Astrocyte of the cerebellum (primary cell): ENCODE measurements at regions of chr1 and their contacts with region 1.

Region 1: GRCh38 chr1:19664453-19665185 is at the start of gene HTR6:
- DNase-seq: no peak
- H3K4me3 ChIP-seq: peak within 1 kb of the TSS; percentile 24
- CTCF ChIP-seq: no peak

Region 2: DNA sequence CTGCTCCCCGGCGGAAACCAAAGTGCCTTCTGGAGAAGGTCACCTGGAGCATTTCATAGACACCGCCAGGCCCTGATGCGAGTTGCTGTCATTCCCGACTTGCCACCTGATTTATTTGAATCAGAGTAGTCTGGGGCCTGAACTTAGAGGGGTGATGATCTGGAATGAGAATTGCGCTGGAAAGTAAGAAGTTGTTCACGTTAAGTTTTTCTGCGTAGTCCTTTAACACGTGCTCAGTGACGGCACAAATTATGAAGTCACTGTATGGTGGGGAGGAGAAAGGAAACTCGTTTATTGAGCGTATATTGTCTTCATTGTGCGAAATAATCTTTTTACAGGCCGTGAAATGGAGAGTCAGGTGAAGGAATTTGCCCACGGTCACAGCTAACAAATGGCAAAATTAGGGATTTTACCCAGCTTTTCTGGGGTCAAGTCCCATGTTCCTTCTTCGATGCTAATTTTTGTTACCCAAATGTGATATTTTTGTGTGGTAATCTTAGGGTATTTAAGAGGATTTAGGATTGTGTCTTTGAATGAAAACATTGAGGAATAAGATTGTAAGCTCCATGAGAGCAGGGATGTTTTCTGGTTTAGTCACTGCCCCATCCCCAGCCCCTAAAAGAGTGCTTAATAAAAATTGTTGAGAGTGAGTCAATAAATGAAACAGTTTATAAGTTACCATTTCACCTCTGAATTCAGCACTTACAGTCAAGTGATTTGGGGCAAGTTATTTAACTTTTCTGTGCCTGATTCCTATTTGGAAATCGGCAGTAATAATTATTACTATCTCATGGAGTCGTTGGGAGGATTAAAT is 66.9 kb before region 1 on chr1:
- in situ Hi-C with region 1: no loop called
- DNase-seq: no peak
- H3K4me3 ChIP-seq: peak overlapping the region; percentile 67
- CTCF ChIP-seq: no peak

Region 3: DNA sequence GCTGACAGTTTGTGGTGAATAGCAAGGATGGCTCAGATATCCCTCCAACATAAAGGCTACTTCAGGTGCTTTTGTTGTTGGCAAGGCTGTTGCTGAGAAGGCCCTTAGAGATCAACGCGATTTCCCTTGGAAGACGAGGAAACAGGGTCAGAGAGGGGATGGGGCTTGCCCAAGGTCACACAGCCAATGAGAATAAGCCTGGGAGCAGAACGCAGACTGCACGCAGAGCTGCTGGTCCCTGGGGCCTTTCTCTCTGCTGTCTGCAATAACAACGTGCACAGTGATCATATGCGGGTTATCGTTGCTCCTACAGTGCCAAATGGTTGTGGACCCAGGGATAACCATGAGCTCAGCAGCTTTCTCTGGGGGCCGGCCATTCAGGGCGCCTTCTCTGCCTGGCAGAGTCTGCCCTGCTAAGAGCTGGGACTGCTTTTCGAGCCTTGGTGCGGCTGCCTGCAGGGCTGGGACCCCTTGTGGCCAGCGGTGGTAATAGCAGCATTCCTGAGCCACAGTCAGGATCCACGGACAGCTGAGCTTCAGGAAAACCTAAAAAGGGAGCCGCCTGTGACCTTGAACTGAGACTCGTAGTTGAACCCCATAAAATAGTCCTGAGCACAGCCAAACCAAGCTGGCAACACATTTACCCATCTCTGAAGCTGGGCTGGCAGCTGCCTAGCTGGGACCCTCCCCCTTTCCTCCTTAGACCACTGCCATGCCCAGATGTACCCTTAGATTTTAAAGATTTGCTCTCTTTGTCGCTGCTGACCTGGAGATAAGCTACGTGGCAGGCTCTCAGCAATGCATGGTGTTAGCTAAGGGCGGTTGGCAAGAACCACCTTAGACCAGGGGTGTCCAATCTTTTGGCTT is 39.9 kb after region 1 on chr1:
- in situ Hi-C with region 1: loop called (anchors 5 kb)
- DNase-seq: peak; percentile 32
- H3K4me3 ChIP-seq: no peak overlapping the region
- CTCF ChIP-seq: peak; percentile 94

Region 4: GRCh38 chr1:19735440-19736127 is 71.0 kb after region 1 on chr1:
- in situ Hi-C with region 1: no loop called
- DNase-seq: peak; percentile 98
- H3K4me3 ChIP-seq: no peak overlapping the region
- CTCF ChIP-seq: no peak